ENCODE measurements at regions of chr16 and their contacts with region 1.

Region 1: GRCh38 chr16:73068541-73069401 is 20.8 kb upstream of the ZFHX3 start:
- DNase-seq: peak; percentile 66
- H3K4me3 Mint-ChIP-seq: peak overlapping the region; percentile 41
- H3K27ac Mint-ChIP-seq: peak overlapping the region; percentile 84
- H3K4me1 Mint-ChIP-seq: peaks cover 44% of the 10 kb centered on the region
- H3K27me3 Mint-ChIP-seq: peaks cover 30% of the 10 kb centered on the region
- CTCF ChIP-seq: no peak

Region 2: DNA sequence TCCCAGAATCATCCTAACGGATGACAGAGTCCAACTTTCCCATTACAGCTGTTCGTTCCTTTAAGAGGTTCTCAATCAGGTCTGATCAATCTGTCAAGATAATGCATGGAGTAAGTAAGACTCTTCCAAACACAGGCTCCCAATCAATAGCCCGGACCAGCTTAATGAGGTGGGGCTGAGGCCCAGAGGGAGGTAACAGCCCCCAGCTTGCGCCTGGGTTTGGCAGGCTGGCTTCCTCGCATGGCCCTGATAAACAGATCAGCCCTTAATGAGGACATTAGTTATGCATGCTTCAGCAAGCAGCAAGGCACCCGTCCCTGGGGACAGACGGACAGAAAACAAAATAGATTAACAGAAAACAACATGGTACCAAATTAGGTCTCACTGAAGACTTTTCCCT is 166.6 kb before region 1 on chr16:
- CTCF ChIA-PET with region 1: interaction called, 12 read pairs
- intact Hi-C with region 1: no loop called
- DNase-seq: no peak
- H3K4me3 Mint-ChIP-seq: no peak overlapping the region
- H3K27ac Mint-ChIP-seq: no peak overlapping the region
- H3K4me1 Mint-ChIP-seq: no peaks in the 10 kb centered on the region
- H3K27me3 Mint-ChIP-seq: no peaks in the 10 kb centered on the region
- CTCF ChIP-seq: no peak

Region 3: GRCh38 chr16:73010150-73010676 is 58.6 kb before region 1 on chr16:
- CTCF ChIA-PET with region 1: no interaction called
- intact Hi-C with region 1: no loop called
- DNase-seq: no peak
- H3K4me3 Mint-ChIP-seq: no peak overlapping the region
- H3K27ac Mint-ChIP-seq: no peak overlapping the region
- H3K4me1 Mint-ChIP-seq: peaks cover 3% of the 10 kb centered on the region
- H3K27me3 Mint-ChIP-seq: no peaks in the 10 kb centered on the region
- CTCF ChIP-seq: no peak

Measured in Calu3 (cell line).